Dendritic cell treated with granulocyte-macrophage colony-stimulating factor and Interleukin-4, amounts not matched to agents 40 ng/mL and 50 ng/mL, for 4 days (primary cell): ENCODE measurements at regions of chr10 and their contacts with region 1.

Region 1: GRCh38 chr10:50605269-50606263 is 18.2 kb downstream of the SGMS1 start:
- H3K4me3 Mint-ChIP-seq: no peak overlapping the region
- H3K27ac Mint-ChIP-seq: peak overlapping the region; percentile 75
- H3K4me1 Mint-ChIP-seq: peaks cover 61% of the 10 kb centered on the region
- H3K27me3 Mint-ChIP-seq: no peaks in the 10 kb centered on the region

Region 2: DNA sequence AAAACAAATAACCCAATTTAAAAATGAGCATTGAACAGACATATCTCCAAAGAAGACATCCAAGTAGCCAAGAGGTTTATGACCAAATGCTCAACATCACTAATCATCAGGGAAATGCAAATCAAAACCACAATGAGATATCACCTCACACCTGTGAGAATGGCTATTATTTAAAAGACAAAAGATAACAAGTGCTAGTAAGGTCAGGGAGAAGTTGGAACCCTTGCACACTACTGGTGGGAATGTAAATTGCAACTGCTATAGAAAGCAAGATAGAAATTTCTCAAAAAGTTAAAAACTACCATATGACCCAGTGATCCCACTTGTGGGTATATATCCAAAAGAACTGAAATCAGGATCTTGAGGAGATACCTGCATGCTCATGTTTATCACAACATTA is 31.3 kb before region 1 on chr10:
- intact Hi-C with region 1: loop called (anchors 5 kb)
- H3K4me3 Mint-ChIP-seq: no peak overlapping the region
- H3K27ac Mint-ChIP-seq: no peak overlapping the region
- H3K4me1 Mint-ChIP-seq: peaks cover 32% of the 10 kb centered on the region
- H3K27me3 Mint-ChIP-seq: no peaks in the 10 kb centered on the region

Region 3: DNA sequence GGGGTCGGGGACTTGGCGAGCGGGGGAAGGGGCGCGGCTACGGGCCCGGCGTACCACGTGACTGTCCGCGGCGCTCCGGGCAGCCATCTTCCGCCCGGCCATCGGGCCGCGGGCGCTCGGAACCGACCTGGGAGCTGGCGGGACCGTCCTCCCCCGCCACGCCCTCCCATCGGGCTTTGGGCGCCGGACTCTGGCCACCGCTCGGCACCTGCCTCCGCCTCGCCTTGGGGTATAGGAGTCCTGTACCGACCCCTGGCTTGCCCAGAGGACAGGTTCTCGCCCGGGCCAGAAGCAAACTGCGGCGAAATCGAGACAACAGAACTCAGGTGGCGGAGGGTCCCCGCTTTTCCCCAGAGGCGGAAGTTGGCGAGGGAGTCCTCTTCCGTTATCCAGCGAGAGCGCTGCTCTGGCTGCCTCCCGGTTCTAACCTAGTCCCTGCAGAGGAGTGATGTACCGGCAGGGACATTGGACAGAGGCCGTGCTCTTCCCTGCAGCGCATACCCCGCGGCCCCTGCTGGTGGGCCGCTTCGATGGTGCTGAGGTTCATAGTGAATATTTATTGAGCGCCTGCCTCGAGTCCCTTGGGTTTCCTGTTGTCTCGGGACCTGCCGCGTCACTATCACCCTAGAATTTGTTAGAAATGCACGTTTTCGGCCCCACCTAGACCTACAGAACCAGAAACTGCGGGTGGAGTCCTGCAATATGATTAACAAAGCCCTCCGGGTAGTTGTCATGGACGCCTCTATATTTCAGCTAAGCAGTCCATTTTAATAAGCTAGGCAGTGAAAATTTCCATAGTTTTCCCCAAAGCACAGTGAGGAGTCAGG is 19.5 kb after region 1 on chr10:
- intact Hi-C with region 1: no loop called
- H3K4me3 Mint-ChIP-seq: peak overlapping the region; percentile 75
- H3K27ac Mint-ChIP-seq: peak overlapping the region; percentile 97
- H3K4me1 Mint-ChIP-seq: peaks cover 15% of the 10 kb centered on the region
- H3K27me3 Mint-ChIP-seq: no peaks in the 10 kb centered on the region

Region 4: GRCh38 chr10:50739618-50740292 is 134.2 kb after region 1 on chr10 and contains the start of gene ASAH2B:
- intact Hi-C with region 1: no loop called
- H3K4me3 Mint-ChIP-seq: peak within 1 kb of the TSS; percentile 83
- H3K27ac Mint-ChIP-seq: no peak within 1 kb of the TSS
- H3K4me1 Mint-ChIP-seq: peaks cover 16% of the 10 kb centered on the region
- H3K27me3 Mint-ChIP-seq: peaks cover 45% of the 10 kb centered on the region